Activated naive CD4-positive, alpha-beta T cell treated with anti-CD3 and anti-CD28 coated beads for 36 hours (primary cell): ENCODE measurements at regions of chrX and their contacts with region 1.

Region 1: DNA sequence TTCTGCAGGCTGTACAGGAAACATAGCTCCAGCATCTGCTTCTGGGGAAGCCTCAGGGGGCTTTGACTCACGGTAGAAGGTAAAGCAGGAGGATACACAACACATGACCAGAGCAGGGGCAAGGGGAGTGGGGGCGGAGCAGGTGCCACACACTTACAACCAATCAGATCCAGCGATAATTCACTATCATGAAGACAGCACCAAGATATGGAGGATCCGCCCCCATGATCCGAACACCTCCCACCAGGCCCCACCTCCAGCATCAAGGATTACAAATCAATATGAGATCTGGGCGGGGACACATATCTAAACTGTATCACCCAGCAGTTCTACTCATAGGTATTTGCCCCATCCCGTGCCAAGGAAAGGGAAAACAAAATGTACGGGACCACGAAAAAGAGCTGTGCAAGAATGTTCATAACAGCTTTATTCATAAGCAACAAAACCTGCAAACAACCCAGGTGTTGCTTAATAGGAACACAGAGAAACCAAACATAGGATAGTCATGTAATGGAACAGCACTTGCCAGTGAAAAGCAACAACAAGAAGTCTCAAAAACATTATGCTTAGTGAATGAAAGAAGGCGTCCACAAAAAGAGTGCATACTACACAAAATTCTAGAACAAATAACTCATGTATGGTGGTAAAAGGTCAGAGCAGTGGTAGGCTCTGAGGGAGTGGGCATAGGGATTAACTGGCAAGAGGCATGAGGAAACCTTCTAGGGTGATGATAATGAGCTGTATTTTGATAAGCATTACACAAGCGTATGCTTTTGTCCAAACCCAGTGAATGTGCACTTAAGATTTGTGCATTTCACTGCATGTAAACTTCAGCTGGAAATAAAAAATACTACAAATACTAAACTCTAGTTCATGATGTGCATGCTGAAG is 130.9 kb upstream of the FAM9B start:
- DNase-seq: no peak
- H3K4me3 Mint-ChIP-seq: no peak overlapping the region
- H3K27ac Mint-ChIP-seq: no peak overlapping the region
- H3K4me1 Mint-ChIP-seq: peaks cover 41% of the 10 kb centered on the region
- H3K27me3 Mint-ChIP-seq: no peaks in the 10 kb centered on the region

Region 2: GRCh38 chrX:8988446-8988845 is 176.3 kb before region 1 on chrX:
- CTCF ChIA-PET with region 1: no interaction called
- intact Hi-C with region 1: loop called (anchors 5 kb)
- DNase-seq: peak; percentile 40
- H3K4me3 Mint-ChIP-seq: no peak overlapping the region
- H3K27ac Mint-ChIP-seq: no peak overlapping the region
- H3K4me1 Mint-ChIP-seq: peaks cover 24% of the 10 kb centered on the region
- H3K27me3 Mint-ChIP-seq: no peaks in the 10 kb centered on the region

Region 3: GRCh38 chrX:9131066-9131465 is 33.7 kb before region 1 on chrX:
- CTCF ChIA-PET with region 1: no interaction called
- intact Hi-C with region 1: loop called (anchors 1 kb)
- DNase-seq: peak; percentile 14
- H3K4me3 Mint-ChIP-seq: no peak overlapping the region
- H3K27ac Mint-ChIP-seq: no peak overlapping the region
- H3K4me1 Mint-ChIP-seq: peaks cover 9% of the 10 kb centered on the region
- H3K27me3 Mint-ChIP-seq: no peaks in the 10 kb centered on the region